CD4-positive, alpha-beta memory T cell (primary cell): ENCODE measurements at regions of chr1 and their contacts with region 1.

Region 1: GRCh38 chr1:212368073-212368484 is 46.6 kb downstream of the PACC1 start:
- DNase-seq: peak; percentile 53 to 68 (median 57)
- H3K4me3 ChIP-seq: no peak overlapping the region
- H3K4me3 Mint-ChIP-seq: no peak overlapping the region
- H3K27ac ChIP-seq: no peak overlapping the region
- H3K27ac Mint-ChIP-seq: peak overlapping the region in 3 of 7 donors; percentile 10 to 55 (median 41)
- H3K4me1 ChIP-seq: no peaks in the 10 kb centered on the region
- H3K4me1 Mint-ChIP-seq: peaks cover 0 to 7% (median 1%) of the 10 kb centered on the region in 4 donors
- H3K27me3 ChIP-seq: no peaks in the 10 kb centered on the region
- H3K27me3 Mint-ChIP-seq: no peaks in the 10 kb centered on the region

Region 2: DNA sequence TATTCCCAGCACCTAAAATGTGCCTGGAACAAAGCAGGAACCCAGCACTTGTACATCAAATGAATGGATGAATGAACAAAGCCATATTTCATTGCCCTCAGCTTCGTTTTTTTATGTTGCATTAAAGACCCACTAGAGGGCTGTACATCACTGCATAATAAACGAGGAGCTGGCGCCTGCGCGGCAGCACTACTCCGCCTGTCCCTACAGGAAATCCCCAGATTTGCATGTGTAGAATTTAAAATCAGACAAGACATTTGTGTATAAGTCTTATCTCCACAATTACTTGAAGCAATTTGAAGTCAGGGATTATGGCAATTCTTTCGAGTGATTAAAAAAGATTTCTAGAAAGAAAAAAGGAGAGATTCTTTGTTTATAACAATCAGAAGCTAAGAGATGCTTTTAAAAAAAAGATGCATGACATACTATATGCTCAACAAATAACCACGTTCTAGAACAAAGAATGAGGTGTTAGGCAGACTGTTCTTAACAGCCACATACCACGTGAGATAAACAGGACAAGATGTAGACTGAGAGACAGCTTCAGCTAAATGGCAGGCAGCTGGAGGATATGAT is 687.2 kb before region 1 on chr1:
- CTCF ChIA-PET with region 1: interaction called, 4 read pairs
- POLR2A ChIA-PET with region 1: no interaction called
- intact Hi-C with region 1: loop called (anchors 1 kb)
- DNase-seq: peak; percentile 76 to 83 (median 82)
- H3K4me3 ChIP-seq: no peak overlapping the region
- H3K4me3 Mint-ChIP-seq: peak overlapping the region in 4 of 8 donors; percentile 0 to 56 (median 17)
- H3K27ac ChIP-seq: peak overlapping the region; percentile 61
- H3K27ac Mint-ChIP-seq: peak overlapping the region; percentile 77 to 98 (median 92)
- H3K4me1 ChIP-seq: peaks cover 15% of the 10 kb centered on the region
- H3K4me1 Mint-ChIP-seq: peaks cover 9 to 26% (median 12%) of the 10 kb centered on the region in 4 donors
- H3K27me3 ChIP-seq: no peaks in the 10 kb centered on the region
- H3K27me3 Mint-ChIP-seq: no peaks in the 10 kb centered on the region

Region 3: DNA sequence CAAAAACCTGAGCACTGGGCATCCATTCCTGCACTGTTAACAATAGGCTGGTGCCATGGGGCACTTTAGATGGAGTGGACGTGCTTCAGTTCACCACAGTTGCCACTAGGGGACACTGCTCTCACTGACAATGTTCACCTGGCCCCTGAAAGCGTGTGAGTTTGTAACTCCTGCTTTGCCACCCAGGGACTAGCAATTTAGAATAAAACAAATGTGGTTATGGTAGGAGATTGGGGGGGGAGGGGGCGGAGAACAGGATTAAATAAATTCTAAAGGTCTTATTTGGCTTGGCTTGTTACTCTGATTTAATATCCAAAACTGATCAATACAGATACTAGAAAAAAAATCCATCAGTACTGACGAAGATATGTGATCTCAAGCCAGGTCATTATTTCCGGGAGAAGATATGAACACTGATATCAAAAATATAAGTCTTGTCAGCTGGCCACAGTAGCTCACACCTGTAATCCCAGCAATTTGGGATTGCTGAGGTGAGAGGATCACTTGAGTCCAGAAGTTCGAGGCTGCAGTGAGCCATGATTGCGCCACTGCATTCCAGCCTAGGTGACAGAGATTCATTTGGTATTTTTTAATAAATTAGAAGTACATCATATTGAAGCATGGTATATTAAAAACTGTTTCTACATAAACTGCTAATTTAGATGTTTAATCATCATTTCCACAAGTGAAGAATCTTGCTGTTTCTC is 355.9 kb before region 1 on chr1:
- CTCF ChIA-PET with region 1: interaction called, 4 read pairs
- POLR2A ChIA-PET with region 1: no interaction called
- intact Hi-C with region 1: loop called (anchors 5 kb)
- DNase-seq: peak; percentile 42 to 66 (median 53)
- H3K4me3 ChIP-seq: no peak overlapping the region
- H3K4me3 Mint-ChIP-seq: no peak overlapping the region
- H3K27ac ChIP-seq: no peak overlapping the region
- H3K27ac Mint-ChIP-seq: peak overlapping the region in 1 of 7 donors; percentile 3
- H3K4me1 ChIP-seq: no peaks in the 10 kb centered on the region
- H3K4me1 Mint-ChIP-seq: peaks cover 0 to 7% (median 4%) of the 10 kb centered on the region in 4 donors
- H3K27me3 ChIP-seq: no peaks in the 10 kb centered on the region
- H3K27me3 Mint-ChIP-seq: no peaks in the 10 kb centered on the region

Region 4: DNA sequence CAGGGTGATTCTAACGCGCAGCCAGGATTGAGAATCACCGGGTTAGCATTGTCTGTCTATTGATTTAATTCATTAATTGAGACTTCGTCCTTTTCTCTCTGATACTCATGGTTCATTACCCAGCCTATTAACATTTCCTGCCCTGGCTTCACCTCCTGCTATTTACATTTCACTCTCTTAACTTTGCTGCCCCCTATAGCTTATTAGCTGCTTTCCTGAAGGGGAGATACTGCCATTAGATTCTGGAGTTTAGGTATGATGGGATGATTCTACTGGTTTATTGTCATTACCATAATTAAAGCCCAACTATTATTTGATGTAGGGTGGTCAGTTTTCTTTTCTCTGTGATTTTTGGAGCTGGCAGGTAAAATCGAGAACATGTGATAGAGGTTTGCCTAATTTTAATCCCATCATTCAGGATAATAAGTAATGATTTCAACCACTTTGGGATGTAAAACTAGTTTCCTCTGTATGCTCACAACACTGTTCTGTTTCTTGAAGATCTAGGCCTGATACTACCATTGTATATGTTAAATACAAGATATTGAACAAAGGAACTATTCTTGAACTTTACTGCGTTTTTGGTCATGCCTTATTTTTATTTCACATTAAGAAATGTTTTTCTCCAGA is 76.5 kb before region 1 on chr1:
- CTCF ChIA-PET with region 1: interaction called, 10 read pairs
- POLR2A ChIA-PET with region 1: no interaction called
- intact Hi-C with region 1: loop called (anchors 2 kb)
- DNase-seq: peak in 4 of 5 donors; percentile 57 to 70 (median 64)
- H3K4me3 ChIP-seq: no peak overlapping the region
- H3K4me3 Mint-ChIP-seq: peak overlapping the region; percentile 27 to 70 (median 60)
- H3K27ac ChIP-seq: no peak overlapping the region
- H3K27ac Mint-ChIP-seq: peak overlapping the region in 4 of 7 donors; percentile 0 to 54 (median 16)
- H3K4me1 ChIP-seq: peaks cover 87% of the 10 kb centered on the region
- H3K4me1 Mint-ChIP-seq: peaks cover 66 to 91% (median 81%) of the 10 kb centered on the region in 4 donors
- H3K27me3 ChIP-seq: no peaks in the 10 kb centered on the region
- H3K27me3 Mint-ChIP-seq: no peaks in the 10 kb centered on the region